ENCODE measurements at regions of chr16 and their contacts with region 1.

Region 1: GRCh38 chr16:68445458-68445857 is 2.9 kb downstream of the SMPD3 start:
- DNase-seq: peak; percentile 63
- CTCF ChIP-seq: peak; percentile 60

Region 2: DNA sequence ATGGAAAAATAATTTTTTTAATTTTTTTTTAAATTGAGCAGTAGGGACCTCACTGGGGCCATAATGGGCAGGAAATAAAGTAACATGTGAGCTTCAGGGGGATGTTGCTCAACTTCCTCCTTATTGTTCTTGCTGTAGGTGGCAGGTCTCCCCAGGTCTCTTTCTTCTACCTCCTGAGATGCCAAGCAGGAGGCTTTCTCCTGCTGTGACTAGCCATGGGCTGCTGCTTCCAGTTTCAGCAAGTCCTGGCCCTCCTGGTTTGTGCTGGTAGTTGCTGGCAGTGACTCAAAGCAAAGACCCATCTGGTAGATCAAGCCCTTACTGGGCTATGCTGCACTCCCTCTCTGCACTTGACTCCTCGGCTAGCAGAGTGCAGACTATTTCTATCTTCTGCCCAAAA is 432.0 kb before region 1 on chr16:
- CTCF ChIA-PET with region 1: no interaction called
- POLR2A ChIA-PET with region 1: no interaction called
- DNase-seq: no peak
- CTCF ChIP-seq: no peak

Region 3: DNA sequence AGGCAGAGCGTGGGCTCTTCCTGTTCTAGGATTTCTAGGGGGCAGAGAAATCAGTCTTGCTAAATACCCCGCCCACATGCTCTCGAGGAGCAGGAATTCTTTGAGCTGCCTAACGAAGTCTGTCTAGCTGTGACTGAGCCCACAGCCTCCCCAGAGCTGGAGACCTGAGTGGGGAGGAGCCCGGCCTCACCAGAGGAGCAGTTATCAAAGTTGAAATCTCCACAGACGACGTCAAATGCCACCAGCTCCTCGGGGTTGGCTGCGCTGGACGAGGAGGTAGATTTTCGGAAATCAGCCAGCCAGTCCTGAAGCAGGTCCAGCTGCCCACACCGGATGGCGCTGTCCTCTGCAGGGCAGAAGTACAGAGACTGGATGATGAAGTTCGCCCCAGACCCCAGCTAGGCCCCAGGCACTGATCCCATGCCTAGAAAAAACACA is 80.9 kb before region 1 on chr16:
- CTCF ChIA-PET with region 1: no interaction called
- POLR2A ChIA-PET with region 1: no interaction called
- DNase-seq: no peak
- CTCF ChIP-seq: no peak

Region 4: GRCh38 chr16:68423771-68424170 is 21.7 kb before region 1 on chr16:
- CTCF ChIA-PET with region 1: interaction called, 10 read pairs
- POLR2A ChIA-PET with region 1: no interaction called
- DNase-seq: no peak
- CTCF ChIP-seq: no peak

Region 5: DNA sequence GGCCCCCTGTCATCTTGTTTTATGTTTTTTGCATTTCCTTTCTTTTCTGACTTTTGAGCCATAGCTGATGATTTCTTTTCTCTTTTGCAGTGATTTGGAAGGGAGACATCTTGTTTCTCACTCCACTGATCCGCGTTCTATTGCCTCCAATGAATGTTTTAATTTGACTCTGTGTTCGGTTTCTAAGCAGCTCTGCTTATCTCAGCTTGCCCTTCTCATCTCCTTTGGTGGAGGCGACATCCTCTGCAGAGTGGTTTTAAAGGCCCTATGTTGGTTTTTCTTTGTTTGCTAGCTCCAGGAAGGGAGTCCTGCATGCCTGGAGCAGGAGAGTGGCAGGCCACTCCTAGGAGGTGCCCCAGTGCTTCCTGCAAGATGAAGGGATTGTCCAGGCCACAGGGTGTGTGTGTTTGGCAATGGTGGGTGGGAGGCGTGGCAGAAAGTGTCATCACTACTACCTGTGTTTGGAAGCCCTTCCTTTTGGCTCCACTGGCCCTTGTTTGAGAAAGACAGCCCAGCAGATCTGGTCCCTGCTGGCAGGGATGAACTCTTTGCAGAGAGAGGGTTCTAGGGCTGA is 10.7 kb before region 1 on chr16:
- CTCF ChIA-PET with region 1: interaction called, 29 read pairs
- POLR2A ChIA-PET with region 1: no interaction called
- DNase-seq: no peak
- CTCF ChIP-seq: no peak

Region 6: DNA sequence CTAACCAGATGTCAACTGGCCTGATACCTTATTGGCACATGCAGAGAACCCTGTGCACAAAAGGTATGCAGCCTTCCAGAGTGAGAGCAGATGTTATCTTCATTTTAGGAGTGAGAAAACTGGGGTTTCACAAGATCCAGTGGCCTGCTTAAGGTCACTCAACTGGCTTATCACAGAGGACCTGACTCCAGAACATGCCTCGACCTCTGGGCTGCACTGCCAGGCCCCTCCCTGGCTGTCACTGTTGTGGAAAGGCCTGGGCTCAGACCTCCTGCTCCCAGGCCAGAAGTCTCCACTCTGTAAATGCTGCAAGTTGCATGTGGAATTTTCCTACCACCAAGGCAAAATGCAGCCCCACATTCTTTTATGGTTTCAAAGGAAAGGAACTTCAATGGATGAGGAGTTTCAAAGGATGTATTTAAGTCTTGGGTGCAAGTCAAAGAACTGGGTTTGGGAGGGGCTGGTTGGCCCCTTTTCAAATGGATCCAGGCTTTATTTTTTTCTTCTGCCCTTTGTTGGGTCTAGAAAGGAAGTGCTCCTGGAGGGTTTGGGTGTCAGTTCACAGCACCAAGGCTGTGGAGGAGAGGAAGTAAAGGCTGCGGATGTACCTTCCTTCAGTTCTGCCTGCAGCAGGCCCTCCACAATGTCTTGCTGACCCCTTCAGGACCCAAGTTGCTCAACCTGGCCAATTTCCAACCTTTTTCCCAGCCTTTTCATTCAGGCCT is 33.2 kb after region 1 on chr16:
- CTCF ChIA-PET with region 1: interaction called, 15 read pairs
- POLR2A ChIA-PET with region 1: no interaction called
- DNase-seq: no peak
- CTCF ChIP-seq: no peak

Region 7: DNA sequence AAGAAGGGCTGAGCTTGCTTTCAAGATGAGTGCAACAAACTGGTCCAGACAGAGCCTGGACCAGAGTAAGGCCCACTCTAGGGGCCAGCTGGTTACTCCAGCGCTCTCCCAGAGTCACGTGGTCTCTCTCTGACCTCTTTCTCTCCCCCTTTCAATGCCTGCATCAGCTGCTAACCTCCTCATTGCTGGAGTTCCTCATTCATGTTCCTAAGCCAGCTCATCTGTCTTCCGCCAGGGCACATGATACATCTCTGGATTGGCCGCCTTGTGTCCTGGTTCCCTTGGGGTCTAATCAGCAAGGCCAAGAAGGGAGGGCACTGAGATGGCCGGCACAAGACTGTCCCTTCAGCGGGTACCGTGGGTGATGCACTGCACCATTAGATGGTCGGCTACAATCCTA is 66.7 kb after region 1 on chr16:
- CTCF ChIA-PET with region 1: interaction called, 46 read pairs
- POLR2A ChIA-PET with region 1: no interaction called
- DNase-seq: no peak
- CTCF ChIP-seq: no peak